Gastrocnemius medialis (tissue), 4 donors: ENCODE measurements at regions of chr4 and their contacts with region 1.

Region 1: DNA sequence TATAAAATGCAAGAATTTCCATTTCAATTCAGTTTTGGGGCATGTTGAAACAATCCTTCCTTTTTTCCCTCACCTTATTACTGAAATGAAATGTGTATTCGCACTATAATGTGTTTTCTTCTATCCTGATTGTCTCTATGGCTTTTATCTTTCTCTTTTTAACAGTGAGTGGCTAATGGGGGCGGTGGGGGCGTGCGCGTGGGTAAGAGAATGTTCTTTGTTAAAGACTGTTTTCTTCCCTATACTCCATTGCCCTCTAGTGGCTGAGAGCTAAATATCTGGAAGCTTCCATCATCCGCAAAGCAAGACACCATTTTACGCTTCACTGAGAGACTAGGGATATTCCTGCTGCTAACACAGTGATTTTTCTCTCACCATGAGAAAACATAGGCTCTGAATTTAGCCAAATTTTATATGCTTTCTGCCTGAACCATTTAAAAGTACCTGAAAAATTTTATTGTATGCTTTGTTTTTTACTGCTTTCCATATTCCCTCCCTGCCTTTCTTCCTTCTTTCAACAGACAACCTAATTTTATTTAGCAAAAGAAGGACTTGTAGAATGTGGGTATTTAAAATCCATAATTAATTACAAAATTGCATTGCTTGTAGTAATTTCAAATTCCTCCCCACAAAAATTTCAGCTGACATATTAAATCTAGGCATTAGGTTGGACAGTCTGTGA is 194.0 kb downstream of the GASK1B start:
- DNase-seq: no peak
- ATAC-seq: peak; percentile 63 to 81
- H3K4me3 ChIP-seq: peak overlapping the region in 2 of 4 donors; percentile 27 to 36
- H3K27ac ChIP-seq: no peak overlapping the region
- H3K4me1 ChIP-seq: peaks cover 5% of the 10 kb centered on the region in 2 donors
- H3K27me3 ChIP-seq: no peaks in the 10 kb centered on the region
- CTCF ChIP-seq: peak; percentile 51 to 77 (median 62)
- POLR2A ChIP-seq: no peak

Region 2: GRCh38 chr4:156475322-156475721 is 1503.5 kb before region 1 on chr4:
- in situ Hi-C with region 1: no loop called
- intact Hi-C with region 1: loop called (anchors 5 kb)
- DNase-seq: no peak
- ATAC-seq: peak; percentile 50 to 66
- H3K4me3 ChIP-seq: no peak overlapping the region
- H3K27ac ChIP-seq: no peak overlapping the region
- H3K4me1 ChIP-seq: no peaks in the 10 kb centered on the region
- H3K27me3 ChIP-seq: no peaks in the 10 kb centered on the region
- CTCF ChIP-seq: peak in 4 of 5 experiments; percentile 20 to 47 (median 34)
- POLR2A ChIP-seq: no peak

Region 3: DNA sequence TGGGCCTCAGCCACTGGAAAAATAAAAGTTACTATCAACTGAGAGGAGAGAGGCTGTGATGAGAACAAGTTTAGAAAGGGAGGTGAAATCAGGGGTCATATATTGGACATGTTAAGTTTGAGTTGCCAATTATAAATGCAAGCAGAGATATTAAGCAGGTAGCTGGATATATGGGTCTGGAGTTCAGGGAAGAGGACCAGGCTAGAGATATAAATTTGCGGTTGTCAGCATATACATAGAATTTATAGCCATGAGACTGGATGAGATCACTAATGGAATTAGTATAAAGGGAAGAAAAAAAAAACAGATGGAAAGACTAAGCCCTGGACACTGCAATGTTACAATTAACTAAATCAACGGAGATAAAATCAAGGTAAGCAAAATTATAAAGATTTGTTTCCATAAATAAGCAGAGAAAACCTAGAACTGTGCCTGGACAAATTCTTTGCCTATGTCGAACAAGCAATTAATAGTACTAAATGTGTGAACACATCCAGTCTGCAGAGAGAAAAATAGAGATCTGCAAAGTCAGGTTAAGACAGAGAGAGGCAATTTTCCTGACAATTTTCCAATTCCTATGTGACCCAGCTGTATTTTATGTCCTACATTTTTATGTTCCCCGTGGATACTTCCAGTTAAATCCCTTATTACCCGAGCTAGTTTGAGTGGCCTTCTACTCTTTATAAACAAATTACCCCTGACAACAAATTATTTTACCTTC is 71.4 kb before region 1 on chr4:
- in situ Hi-C with region 1: no loop called
- intact Hi-C with region 1: no loop called
- DNase-seq: no peak
- ATAC-seq: no peak
- H3K4me3 ChIP-seq: no peak overlapping the region
- H3K27ac ChIP-seq: no peak overlapping the region
- H3K4me1 ChIP-seq: no peaks in the 10 kb centered on the region
- H3K27me3 ChIP-seq: no peaks in the 10 kb centered on the region
- CTCF ChIP-seq: no peak
- POLR2A ChIP-seq: no peak

Region 4: GRCh38 chr4:158250321-158250720 is 271.5 kb after region 1 on chr4:
- in situ Hi-C with region 1: no loop called
- intact Hi-C with region 1: no loop called
- DNase-seq: no peak
- ATAC-seq: no peak
- H3K4me3 ChIP-seq: no peak overlapping the region
- H3K27ac ChIP-seq: no peak overlapping the region
- H3K4me1 ChIP-seq: no peaks in the 10 kb centered on the region
- H3K27me3 ChIP-seq: no peaks in the 10 kb centered on the region
- CTCF ChIP-seq: no peak
- POLR2A ChIP-seq: no peak

Region 5: GRCh38 chr4:158624889-158625478 is 646.2 kb after region 1 on chr4:
- in situ Hi-C with region 1: loop called in 3 of 4 experiments (anchors 25 kb)
- intact Hi-C with region 1: no loop called
- DNase-seq: peak in 1 of 2 donors; percentile 3
- ATAC-seq: peak; percentile 73 to 82
- H3K4me3 ChIP-seq: peak overlapping the region in 2 of 4 donors; percentile 5 to 9
- H3K27ac ChIP-seq: peak overlapping the region; percentile 55 to 82 (median 70)
- H3K4me1 ChIP-seq: peaks cover 16 to 21% of the 10 kb centered on the region in 2 donors
- H3K27me3 ChIP-seq: no peaks in the 10 kb centered on the region
- CTCF ChIP-seq: peak; percentile 52 to 72 (median 68)
- POLR2A ChIP-seq: no peak